Posterior cingulate gyrus (tissue), 11 donors: ENCODE measurements at regions of chr4 and their contacts with region 1.

Region 1: GRCh38 chr4:77385124-77385969 is 220.3 kb upstream of the CXCL13 start:
- DNase-seq: peak; percentile 35 to 93 (median 67)

Region 2: DNA sequence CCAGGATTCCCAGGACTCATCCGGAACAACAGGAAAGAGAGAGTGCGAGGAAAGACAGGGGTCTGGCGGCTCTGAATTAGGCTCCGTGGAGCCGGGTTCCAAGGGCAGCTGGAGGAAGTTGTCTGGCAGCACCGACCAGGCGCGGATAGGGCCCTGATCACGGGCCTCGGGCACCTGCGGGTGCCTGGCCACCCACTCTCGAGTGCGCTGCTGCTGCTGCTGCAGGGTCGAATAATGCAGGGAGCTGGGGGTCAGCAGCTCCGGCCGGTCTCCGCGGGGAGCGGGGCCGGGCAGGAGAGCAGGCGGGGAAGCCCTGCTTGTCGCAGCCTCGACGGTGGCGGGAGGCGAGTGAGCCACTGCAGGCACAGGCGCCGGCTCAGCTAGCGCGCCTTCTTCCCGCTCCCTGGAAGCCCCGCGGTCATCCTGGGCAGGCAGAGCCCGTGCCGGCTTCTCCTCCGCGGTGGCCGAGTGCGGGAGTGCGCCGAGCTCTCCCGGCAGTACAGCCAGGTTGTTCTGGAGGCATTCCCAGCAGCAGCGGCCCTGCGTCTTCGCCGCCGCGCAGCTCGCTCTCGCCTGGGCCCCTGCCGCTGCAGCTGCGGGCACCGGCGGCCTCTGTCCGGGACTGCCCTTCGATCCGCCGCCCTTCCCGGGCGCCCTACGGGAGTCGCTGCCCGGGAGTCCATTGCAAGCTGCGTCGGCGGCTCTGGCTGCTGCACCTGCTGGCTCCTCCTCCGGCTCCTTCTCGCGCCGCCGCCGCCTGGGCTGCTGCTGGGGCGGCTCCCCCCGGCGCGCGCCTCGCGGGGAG is 488.4 kb before region 1 on chr4:
- intact Hi-C with region 1: no loop called
- DNase-seq: peak in 8 of 10 donors; percentile 16 to 92 (median 44)

Region 3: DNA sequence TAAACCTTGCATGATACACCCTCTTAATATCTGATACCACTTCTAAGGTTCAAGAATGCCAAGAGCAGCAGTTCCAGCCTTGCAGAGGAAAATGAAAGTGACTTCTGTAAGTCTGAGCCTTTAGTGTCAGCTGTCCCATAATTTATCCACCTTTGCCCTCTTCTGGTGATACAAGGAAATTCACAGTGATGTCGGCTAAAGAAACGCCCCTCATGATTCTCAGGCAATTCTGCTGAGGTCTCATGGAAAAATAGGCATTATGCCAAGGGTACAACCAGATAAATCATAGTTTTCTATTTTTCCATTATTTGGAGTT is 48.0 kb after region 1 on chr4:
- intact Hi-C with region 1: loop called (anchors 1 kb)
- DNase-seq: no peak

Region 4: GRCh38 chr4:77600521-77601451 is 215.4 kb after region 1 on chr4:
- intact Hi-C with region 1: loop called (anchors 5 kb)
- DNase-seq: no peak

Region 5: DNA sequence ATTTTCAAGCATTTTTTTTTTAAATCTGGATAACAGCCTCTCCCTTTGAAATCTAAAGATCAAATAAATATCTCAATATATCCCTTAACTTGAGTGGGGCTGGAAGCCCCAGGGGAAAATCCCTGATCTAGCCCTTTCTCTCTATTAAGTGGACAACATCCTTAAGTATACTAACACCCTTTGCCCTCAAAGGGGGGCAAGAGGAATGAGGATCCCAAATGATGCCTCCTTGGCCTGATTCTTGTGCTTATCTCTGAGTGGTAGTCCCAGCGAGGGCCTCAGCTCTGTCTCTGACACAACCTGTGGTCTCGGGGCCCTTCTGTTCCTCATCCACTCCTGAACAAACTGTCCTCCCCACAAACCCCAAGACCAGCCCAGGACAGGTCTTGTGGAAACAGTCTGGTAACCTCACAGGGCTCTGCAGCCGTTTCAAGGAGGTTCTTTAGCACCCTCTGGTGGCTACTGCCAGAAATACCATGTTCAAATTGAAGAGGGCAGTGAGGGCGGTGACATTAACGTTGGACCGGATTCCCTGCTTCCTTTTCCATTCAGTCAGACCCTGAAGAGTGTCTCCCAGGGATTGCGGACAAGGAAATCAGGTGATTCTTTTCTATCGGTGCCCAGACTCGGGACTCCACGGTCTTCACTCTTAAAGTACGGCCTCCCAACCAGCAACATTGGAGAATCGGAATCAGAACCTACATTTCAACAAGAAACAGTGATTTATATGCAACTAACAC is 233.2 kb after region 1 on chr4:
- intact Hi-C with region 1: loop called (anchors 5 kb)
- DNase-seq: peak in 8 of 10 donors; percentile 19 to 90 (median 58)

Region 6: DNA sequence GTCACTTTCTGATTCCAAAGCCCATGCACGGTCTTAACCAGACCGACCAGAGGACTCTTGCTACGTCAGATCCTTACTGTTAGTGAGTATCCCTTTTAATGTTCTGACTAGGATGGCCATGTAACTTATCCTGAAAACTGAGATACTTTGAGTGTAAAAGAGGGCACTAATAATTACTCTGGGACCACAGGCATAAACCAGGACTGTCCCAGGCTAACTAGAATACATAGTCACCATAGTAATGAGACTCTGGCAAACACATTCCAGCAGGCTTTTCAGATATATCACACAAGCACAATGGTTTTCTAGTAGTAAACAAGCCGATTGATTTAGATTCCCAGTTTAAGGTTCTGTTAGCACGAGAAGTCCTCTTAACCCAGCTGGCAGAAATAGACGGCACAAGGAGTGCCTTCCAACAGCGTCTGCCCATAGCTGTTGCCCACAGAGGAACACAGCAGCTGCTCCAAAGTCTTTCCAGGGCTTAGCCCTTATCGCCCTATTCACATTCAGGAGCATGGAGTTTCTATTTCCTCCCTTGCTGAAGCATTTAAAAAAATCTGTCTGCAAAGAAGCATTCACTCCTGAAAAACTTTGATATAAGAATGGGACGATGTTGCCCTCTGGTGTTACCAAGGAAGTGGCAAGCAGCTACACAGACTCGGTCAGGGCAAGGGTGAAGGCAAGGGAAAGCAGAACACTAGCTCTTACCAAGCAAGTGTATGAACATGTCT is 312.7 kb after region 1 on chr4:
- intact Hi-C with region 1: loop called (anchors 10 kb)
- DNase-seq: peak in 3 of 10 donors; percentile 13 to 69 (median 14)

Region 7: GRCh38 chr4:78477276-78477675 is 1091.9 kb after region 1 on chr4:
- intact Hi-C with region 1: no loop called
- DNase-seq: no peak